CD8-positive, alpha-beta memory T cell (primary cell): ENCODE measurements at regions of chr2 and their contacts with region 1.

Region 1: GRCh38 chr2:98385050-98385699 is 38.9 kb downstream of the CNGA3 start:
- DNase-seq: peak; percentile 32 to 77 (median 50)
- H3K4me3 ChIP-seq: no peak overlapping the region
- H3K4me3 Mint-ChIP-seq: no peak overlapping the region
- H3K27ac ChIP-seq: no peak overlapping the region
- H3K27ac Mint-ChIP-seq: no peak overlapping the region
- H3K4me1 ChIP-seq: no peaks in the 10 kb centered on the region
- H3K4me1 Mint-ChIP-seq: peaks cover 0 to 3% (median 0%) of the 10 kb centered on the region in 3 donors
- H3K27me3 ChIP-seq: no peaks in the 10 kb centered on the region
- H3K27me3 Mint-ChIP-seq: peaks cover 12 to 43% of the 10 kb centered on the region in 2 donors

Region 2: DNA sequence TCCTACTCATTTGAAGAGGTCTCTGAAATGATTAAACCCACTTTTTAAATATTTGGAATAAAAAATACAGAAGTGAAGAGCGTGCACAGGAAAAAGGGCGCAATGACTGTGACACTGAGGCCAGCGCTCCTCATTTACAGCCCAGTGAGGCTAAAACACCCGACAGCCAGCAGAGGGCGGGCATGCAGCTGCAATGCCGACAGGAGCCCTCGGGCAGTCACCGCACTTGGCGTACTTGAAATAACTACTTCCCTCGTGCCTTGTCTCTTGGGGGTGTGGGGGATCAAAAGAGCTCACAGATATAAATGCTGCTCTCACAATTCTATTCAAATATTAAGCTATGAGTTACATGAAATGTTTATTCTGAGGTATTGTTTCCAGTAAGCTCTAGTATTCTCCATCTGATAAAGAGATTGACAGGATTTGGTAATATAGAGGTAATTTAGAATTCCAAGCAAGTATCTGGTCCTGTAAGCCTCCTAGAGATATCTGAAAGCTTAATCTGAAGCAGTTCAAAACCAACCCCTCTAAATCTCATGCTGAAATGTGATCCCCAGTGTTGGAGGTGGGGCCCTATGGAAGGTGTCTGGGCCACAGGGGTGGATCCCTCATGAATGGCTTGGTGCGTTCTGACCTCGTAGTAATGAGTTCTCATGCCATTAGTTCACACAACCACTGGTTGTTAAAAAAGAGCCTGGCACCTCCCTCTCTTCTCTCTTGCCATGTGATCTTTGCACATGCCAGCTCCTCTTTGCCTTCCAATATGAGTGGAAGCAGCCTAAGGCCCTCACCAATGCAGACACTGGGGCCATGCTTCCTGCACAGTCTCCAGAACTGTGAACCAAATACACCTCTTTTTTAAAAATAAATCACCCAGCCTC is 578.2 kb before region 1 on chr2:
- CTCF ChIA-PET with region 1: interaction called, 13 read pairs
- POLR2A ChIA-PET with region 1: no interaction called
- DNase-seq: peak; percentile 52 to 83 (median 60)
- H3K4me3 ChIP-seq: no peak overlapping the region
- H3K4me3 Mint-ChIP-seq: no peak overlapping the region
- H3K27ac ChIP-seq: no peak overlapping the region
- H3K27ac Mint-ChIP-seq: peak overlapping the region in 2 of 8 donors; percentile 15 to 54
- H3K4me1 ChIP-seq: no peaks in the 10 kb centered on the region
- H3K4me1 Mint-ChIP-seq: peaks cover 0 to 2% (median 0%) of the 10 kb centered on the region in 3 donors
- H3K27me3 ChIP-seq: no peaks in the 10 kb centered on the region
- H3K27me3 Mint-ChIP-seq: no peaks in the 10 kb centered on the region

Region 3: DNA sequence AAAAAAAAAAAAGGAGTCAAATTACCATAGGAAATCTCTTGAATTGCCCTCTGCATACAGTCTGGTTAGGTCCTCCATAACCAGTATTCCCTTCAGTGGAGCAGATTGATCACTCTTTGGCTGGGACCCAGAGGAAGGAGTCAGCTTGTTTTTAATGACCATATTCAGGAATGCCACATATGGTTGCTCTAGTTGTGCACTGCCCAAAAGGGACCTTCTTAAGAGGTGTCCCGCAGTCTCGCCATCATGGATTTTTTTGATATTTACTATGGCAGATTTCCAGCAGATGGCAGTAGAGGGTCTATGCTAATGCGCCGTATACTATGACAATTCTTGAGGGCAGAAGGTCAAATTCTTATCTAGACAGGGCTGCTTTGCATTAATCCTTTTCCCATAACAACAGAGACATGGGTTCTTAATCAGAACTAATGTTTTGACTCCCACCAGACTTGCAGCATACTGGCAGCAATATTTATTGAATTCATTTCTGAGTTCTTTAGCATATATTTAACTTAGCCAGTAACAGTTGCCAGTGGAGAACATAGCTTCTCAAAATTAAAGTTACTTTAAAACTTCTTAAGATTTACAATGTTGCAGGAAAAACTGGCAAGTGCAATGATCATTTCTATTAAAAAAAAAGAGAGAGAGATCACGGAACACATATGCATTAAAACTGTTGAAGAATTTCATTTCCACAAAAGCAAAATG is 27.7 kb after region 1 on chr2:
- CTCF ChIA-PET with region 1: no interaction called
- POLR2A ChIA-PET with region 1: no interaction called
- DNase-seq: peak; percentile 27 to 74 (median 56)
- H3K4me3 ChIP-seq: no peak overlapping the region
- H3K4me3 Mint-ChIP-seq: no peak overlapping the region
- H3K27ac ChIP-seq: no peak overlapping the region
- H3K27ac Mint-ChIP-seq: peak overlapping the region in 2 of 8 donors; percentile 15 to 58
- H3K4me1 ChIP-seq: no peaks in the 10 kb centered on the region
- H3K4me1 Mint-ChIP-seq: peaks cover 6 to 8% (median 6%) of the 10 kb centered on the region in 3 donors
- H3K27me3 ChIP-seq: no peaks in the 10 kb centered on the region
- H3K27me3 Mint-ChIP-seq: peaks cover 0 to 6% of the 10 kb centered on the region in 2 donors

Region 4: DNA sequence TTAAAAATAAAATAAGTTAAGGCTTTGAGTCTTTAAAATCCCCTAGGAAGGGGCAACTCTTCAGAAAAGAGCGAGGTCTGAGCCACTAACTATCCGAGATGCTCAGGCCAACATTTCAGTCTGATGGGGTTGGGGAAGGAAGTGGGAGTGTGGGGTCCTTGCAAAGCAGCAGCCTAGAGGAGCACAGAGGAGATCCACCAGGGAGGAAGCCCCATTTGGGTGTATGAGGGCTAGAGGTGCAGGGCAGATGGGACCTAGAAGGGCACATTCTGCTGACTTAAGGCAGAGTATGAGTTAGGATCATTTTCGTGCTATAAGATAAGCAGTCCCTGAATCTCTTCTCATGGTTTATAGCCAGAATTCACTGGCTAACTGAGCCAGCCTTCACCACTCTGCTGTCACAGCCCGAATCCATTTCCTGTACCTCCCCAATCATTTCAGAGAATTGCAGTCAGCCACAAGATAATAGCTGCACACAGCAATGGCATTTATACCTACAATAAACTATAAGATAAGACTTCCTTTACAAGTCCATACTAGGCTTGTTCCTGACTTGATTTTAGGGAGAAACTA is 832.8 kb after region 1 on chr2:
- CTCF ChIA-PET with region 1: no interaction called
- POLR2A ChIA-PET with region 1: no interaction called
- DNase-seq: no peak
- H3K4me3 ChIP-seq: no peak overlapping the region
- H3K4me3 Mint-ChIP-seq: no peak overlapping the region
- H3K27ac ChIP-seq: no peak overlapping the region
- H3K27ac Mint-ChIP-seq: peak overlapping the region in 1 of 8 donors; percentile 77
- H3K4me1 ChIP-seq: no peaks in the 10 kb centered on the region
- H3K4me1 Mint-ChIP-seq: no peaks in the 10 kb centered on the region
- H3K27me3 ChIP-seq: no peaks in the 10 kb centered on the region
- H3K27me3 Mint-ChIP-seq: no peaks in the 10 kb centered on the region